ENCODE measurements at regions of chr9 and their contacts with region 1.

Region 1: DNA sequence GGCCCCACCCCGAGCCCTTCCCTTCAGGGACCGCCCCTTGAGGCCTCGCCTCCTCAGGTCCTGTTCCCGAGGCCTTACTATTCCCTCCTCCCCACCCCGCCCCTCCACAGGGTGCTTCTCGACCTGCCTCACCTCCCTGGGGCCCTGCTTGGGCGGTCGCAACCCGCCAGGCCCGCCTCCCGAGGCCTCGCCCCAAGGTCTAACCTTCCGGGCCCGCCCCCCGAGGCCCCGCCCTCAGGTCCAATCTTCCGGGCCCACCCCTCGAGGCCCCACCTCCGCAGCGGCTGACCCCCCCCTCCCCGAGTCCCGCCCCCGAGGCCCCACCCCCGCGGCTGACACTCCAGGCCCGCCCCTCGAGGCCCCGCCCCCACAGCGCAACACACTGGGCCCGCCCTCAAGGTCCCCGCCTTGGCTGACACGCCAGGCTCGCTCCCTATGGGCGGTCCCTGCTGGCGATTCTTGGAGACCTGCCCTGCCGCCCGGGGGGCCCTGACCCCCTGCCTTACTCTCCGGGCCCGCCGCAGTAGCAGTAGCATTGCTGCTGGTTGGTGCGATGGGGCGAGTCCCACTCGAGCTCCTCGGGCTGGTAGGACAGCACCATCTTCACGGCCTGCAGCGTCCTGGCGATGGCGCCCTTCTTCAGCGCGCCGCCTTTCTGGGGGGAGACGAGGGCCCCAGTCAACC is 8.2 kb downstream of the PHF19 start:
- DNase-seq: peak; percentile 97
- ATAC-seq: peak; percentile 90
- H3K4me3 ChIP-seq: peak overlapping the region in 4 of 5 experiments; percentile 57 to 84 (median 71)
- H3K4me3 Mint-ChIP-seq: peak overlapping the region; percentile 97
- H3K27ac ChIP-seq: peak overlapping the region; percentile 69 to 81
- H3K27ac Mint-ChIP-seq: peak overlapping the region; percentile 98
- H3K4me1 ChIP-seq: peaks cover 0 to 19% of the 10 kb centered on the region in 2 donors
- H3K4me1 Mint-ChIP-seq: peaks cover 13% of the 10 kb centered on the region
- H3K27me3 ChIP-seq: no peaks in the 10 kb centered on the region
- H3K27me3 Mint-ChIP-seq: no peaks in the 10 kb centered on the region
- CTCF ChIP-seq: peak; percentile 70

Region 2: GRCh38 chr9:120312031-120312430 is 556.8 kb before region 1 on chr9:
- CTCF ChIA-PET with region 1: no interaction called
- POLR2A ChIA-PET with region 1: no interaction called
- intact Hi-C with region 1: no loop called
- DNase-seq: no peak
- ATAC-seq: no peak
- H3K4me3 ChIP-seq: no peak overlapping the region
- H3K4me3 Mint-ChIP-seq: no peak overlapping the region
- H3K27ac ChIP-seq: no peak overlapping the region
- H3K27ac Mint-ChIP-seq: no peak overlapping the region
- H3K4me1 ChIP-seq: no peaks in the 10 kb centered on the region
- H3K4me1 Mint-ChIP-seq: no peaks in the 10 kb centered on the region
- H3K27me3 ChIP-seq: no peaks in the 10 kb centered on the region
- H3K27me3 Mint-ChIP-seq: peaks cover 19% of the 10 kb centered on the region
- CTCF ChIP-seq: no peak

Region 3: GRCh38 chr9:120733190-120733589 is 135.6 kb before region 1 on chr9:
- CTCF ChIA-PET with region 1: no interaction called
- POLR2A ChIA-PET with region 1: no interaction called
- intact Hi-C with region 1: no loop called
- DNase-seq: no peak
- ATAC-seq: no peak
- H3K4me3 ChIP-seq: no peak overlapping the region
- H3K4me3 Mint-ChIP-seq: no peak overlapping the region
- H3K27ac ChIP-seq: no peak overlapping the region
- H3K27ac Mint-ChIP-seq: no peak overlapping the region
- H3K4me1 ChIP-seq: peaks cover 10 to 16% of the 10 kb centered on the region in 2 donors
- H3K4me1 Mint-ChIP-seq: peaks cover 18% of the 10 kb centered on the region
- H3K27me3 ChIP-seq: no peaks in the 10 kb centered on the region
- H3K27me3 Mint-ChIP-seq: no peaks in the 10 kb centered on the region
- CTCF ChIP-seq: no peak

Region 4: DNA sequence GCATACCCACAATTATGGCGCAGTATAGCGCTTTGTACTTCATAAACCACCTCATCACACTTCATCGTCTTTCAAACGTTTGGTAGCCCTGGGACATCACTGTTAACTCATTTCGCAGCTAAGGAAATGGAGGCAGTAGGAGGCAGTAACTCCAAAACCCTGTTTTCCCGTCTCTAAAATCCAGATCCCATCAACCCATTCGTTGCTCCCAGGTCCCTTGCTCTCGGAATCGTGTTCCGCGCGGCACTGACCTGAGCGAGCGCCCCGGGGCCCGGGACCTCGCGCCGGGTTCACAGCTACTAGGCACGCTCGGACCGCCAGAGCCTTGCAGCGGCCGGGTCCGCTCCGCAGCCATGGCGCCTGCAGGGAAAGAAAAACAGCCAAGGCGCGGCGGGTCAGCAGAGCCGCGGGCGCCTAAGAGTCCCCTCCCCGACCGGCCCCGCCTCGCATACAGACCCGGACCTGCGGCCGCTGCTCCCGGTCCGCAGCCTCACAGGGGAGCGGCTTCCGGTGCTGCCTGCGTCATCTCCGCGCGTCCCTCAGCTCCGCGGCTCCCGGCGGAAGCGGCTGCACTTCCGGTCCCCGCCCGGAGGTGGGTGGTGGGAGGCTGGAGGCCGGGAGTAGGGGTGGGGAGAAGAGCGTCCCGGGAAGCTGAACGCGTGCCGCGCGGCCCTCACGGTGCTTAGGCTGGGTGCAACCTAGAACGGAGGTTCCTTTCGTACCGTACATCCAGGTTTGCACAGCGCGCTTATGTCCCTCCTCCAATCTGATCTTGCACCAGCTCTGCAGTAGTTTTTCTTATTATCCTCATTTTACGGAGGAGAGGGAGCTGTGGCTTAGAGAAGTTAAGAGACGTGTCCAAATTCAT is 75.7 kb before region 1 on chr9 and contains the start of gene FBXW2:
- CTCF ChIA-PET with region 1: interaction called, 3 read pairs
- POLR2A ChIA-PET with region 1: no interaction called
- intact Hi-C with region 1: loop called (anchors 1 kb)
- DNase-seq: peak; percentile 88
- ATAC-seq: peak; percentile 94
- H3K4me3 ChIP-seq: peak within 1 kb of the TSS; percentile 73 to 96 (median 89)
- H3K4me3 Mint-ChIP-seq: peak within 1 kb of the TSS; percentile 92
- H3K27ac ChIP-seq: peak within 1 kb of the TSS; percentile 77 to 87
- H3K27ac Mint-ChIP-seq: peak within 1 kb of the TSS; percentile 92
- H3K4me1 ChIP-seq: peaks cover 18 to 25% of the 10 kb centered on the region in 2 donors
- H3K4me1 Mint-ChIP-seq: peaks cover 38% of the 10 kb centered on the region
- H3K27me3 ChIP-seq: no peaks in the 10 kb centered on the region
- H3K27me3 Mint-ChIP-seq: no peaks in the 10 kb centered on the region
- CTCF ChIP-seq: no peak
- total RNA-seq, gene FBXW2: 70.6 and 73.3 TPM in 2 replicates

Region 5: DNA sequence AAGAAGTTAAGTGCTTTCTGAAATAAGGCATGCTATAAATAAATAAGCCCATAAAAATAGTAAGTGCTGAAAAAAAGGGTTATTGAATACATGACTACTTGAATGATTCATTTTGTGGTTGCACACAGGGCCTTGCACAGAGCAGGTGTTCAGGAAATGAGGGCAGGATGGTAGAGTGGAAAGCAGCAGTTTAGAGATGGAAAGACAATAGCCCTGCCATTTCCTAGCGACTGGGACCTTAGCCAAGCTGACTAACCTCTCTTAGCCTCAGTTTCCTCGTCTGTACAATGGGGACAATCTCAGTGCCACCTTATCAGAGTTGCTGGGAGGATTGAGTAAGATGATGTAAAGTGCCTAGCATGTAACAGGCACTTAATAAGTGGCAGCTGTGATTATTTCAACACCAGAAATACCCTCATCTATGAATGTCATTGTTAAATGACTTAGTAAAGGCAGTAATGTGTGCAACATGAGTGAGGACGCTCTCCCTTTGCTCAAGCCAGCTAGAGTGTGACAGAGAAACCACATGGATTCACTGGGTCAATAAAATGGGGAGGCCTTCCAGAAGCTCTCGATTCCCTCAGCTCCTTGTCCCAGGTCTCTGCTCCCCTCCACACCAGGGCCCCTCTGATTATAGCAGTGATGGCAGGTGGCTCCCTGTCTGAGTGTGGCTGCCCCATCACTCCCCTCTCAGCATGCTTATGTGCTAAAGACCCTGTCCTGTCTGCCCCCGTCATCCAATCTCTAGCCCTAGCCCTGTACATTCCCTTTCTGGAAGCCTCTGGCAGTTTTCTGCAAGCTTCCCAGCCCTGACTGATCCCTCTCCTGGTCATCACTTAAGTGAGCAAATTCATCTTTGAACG is 24.2 kb after region 1 on chr9:
- CTCF ChIA-PET with region 1: interaction called, 7 read pairs
- POLR2A ChIA-PET with region 1: interaction called, 9 read pairs
- intact Hi-C with region 1: loop called (anchors 1 kb)
- DNase-seq: peak; percentile 79
- ATAC-seq: peak; percentile 88
- H3K4me3 ChIP-seq: peak overlapping the region in 1 of 5 experiments; percentile 13
- H3K4me3 Mint-ChIP-seq: peak overlapping the region; percentile 71
- H3K27ac ChIP-seq: peak overlapping the region; percentile 51 to 65
- H3K27ac Mint-ChIP-seq: peak overlapping the region; percentile 79
- H3K4me1 ChIP-seq: peaks cover 48 to 49% of the 10 kb centered on the region in 2 donors
- H3K4me1 Mint-ChIP-seq: peaks cover 50% of the 10 kb centered on the region
- H3K27me3 ChIP-seq: no peaks in the 10 kb centered on the region
- H3K27me3 Mint-ChIP-seq: no peaks in the 10 kb centered on the region
- CTCF ChIP-seq: no peak

Region 6: GRCh38 chr9:120936011-120936763 is 67.4 kb after region 1 on chr9:
- CTCF ChIA-PET with region 1: interaction called, 102 read pairs
- POLR2A ChIA-PET with region 1: interaction called, 10 read pairs
- intact Hi-C with region 1: loop called (anchors 1 kb)
- DNase-seq: peak; percentile 85
- ATAC-seq: peak; percentile 54
- H3K4me3 ChIP-seq: peak overlapping the region in 2 of 5 experiments; percentile 18 to 29
- H3K4me3 Mint-ChIP-seq: peak overlapping the region; percentile 61
- H3K27ac ChIP-seq: peak overlapping the region in 1 of 2 donors; percentile 55
- H3K27ac Mint-ChIP-seq: peak overlapping the region; percentile 44
- H3K4me1 ChIP-seq: peaks cover 58% of the 10 kb centered on the region in 2 donors
- H3K4me1 Mint-ChIP-seq: peaks cover 55% of the 10 kb centered on the region
- H3K27me3 ChIP-seq: no peaks in the 10 kb centered on the region
- H3K27me3 Mint-ChIP-seq: no peaks in the 10 kb centered on the region
- CTCF ChIP-seq: peak; percentile 88

Region 7: DNA sequence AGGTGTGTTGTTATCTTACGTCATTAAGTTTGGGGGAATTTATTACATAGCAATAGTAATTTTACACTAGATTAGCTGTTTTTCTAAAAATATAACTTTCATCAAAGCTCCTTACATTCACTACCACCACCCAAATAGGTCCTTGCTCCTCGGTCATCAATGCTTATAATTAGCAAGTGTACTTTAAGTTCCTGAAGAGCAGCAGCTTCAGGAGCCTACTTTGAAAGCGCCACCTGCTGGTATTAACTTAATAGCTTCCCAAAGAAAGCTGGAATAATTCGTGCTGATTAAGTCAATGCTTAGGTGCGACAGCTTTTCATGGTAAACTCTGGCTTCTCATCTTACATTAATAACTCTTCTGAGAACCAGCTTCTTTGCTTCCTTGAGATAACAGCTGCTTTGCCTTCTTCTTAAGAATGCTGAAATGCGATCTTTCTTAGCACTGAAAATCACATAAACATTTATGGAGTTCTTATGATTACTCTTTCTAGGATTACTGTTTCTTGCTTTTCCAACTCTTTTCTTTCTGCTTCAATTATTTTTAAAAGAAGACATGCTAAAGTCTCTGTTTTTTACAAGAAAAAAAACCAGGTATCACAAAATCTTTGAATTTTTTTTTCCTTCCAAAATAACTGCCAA is 191.3 kb after region 1 on chr9:
- CTCF ChIA-PET with region 1: interaction called, 17 read pairs
- POLR2A ChIA-PET with region 1: no interaction called
- intact Hi-C with region 1: no loop called
- DNase-seq: peak; percentile 76
- ATAC-seq: peak; percentile 51
- H3K4me3 ChIP-seq: no peak overlapping the region
- H3K4me3 Mint-ChIP-seq: no peak overlapping the region
- H3K27ac ChIP-seq: no peak overlapping the region
- H3K27ac Mint-ChIP-seq: no peak overlapping the region
- H3K4me1 ChIP-seq: peaks cover 0 to 7% of the 10 kb centered on the region in 2 donors
- H3K4me1 Mint-ChIP-seq: peaks cover 6% of the 10 kb centered on the region
- H3K27me3 ChIP-seq: no peaks in the 10 kb centered on the region
- H3K27me3 Mint-ChIP-seq: no peaks in the 10 kb centered on the region
- CTCF ChIP-seq: peak; percentile 81

Region 8: DNA sequence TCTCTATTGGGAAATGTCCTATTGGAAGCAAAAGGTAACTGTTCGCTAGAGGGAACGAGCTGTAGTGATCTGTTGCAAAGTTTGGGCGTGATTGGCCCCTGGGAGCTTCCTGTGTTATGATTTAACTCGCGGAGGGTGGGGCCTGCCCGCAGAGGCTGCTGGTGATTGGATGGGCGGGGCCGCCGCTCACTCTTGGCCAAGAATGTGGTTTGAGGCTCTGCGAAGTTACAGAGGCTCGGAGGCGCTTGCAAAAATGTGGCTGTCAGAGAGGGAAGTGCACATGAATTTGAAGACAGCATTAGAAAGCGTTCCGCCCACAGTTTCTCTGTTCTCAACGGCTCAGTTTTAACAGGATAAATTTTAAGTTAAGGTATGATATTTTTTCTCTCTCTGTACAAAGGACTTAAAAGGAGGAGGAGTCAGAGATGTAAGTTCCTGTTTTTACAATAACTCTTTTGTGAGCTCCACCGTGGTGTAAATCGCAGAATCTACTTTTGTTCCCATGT is 252.8 kb after region 1 on chr9:
- CTCF ChIA-PET with region 1: no interaction called
- POLR2A ChIA-PET with region 1: interaction called, 3 read pairs
- intact Hi-C with region 1: loop called (anchors 2 kb)
- DNase-seq: peak; percentile 95
- ATAC-seq: peak; percentile 100
- H3K4me3 ChIP-seq: peak overlapping the region; percentile 44 to 78 (median 65)
- H3K4me3 Mint-ChIP-seq: peak overlapping the region; percentile 86
- H3K27ac ChIP-seq: peak overlapping the region; percentile 52 to 75
- H3K27ac Mint-ChIP-seq: peak overlapping the region; percentile 90
- H3K4me1 ChIP-seq: peaks cover 11 to 19% of the 10 kb centered on the region in 2 donors
- H3K4me1 Mint-ChIP-seq: peaks cover 42% of the 10 kb centered on the region
- H3K27me3 ChIP-seq: no peaks in the 10 kb centered on the region
- H3K27me3 Mint-ChIP-seq: no peaks in the 10 kb centered on the region
- CTCF ChIP-seq: peak; percentile 28

Region 9: DNA sequence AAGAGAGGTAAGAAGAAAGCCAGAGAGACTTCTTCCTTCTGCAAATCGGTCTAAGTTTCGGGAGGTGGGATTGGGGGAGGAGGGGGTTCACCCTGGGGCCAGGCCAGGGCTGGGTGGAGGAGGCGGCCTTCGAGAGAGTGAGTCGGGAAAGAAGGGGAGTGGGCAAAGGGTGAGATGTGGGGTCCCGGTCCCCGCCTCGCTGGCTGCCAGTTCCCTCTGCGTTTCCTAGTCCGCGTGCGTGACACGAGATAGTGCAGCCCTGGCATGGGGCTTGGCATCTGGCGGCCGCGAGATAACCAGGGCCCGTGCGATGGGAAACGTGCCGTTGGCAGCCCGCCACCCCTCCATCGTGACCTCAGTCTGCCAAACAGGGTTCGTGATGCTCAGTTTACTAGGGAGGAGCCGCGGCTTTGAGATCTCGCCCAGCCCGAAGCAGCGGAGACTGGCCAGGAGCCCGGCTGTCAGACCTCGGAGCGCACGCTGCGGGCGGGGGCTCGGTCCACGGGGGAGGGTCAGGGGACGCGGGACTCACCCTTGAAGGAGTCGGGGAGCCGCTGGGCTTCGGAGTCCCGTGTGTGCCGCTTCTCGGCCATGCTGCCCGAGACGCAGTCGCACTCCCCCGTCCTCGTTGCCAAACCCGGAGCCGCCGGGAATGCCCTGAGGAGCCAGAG is 500.9 kb after region 1 on chr9 and contains the start of gene STOM:
- CTCF ChIA-PET with region 1: no interaction called
- POLR2A ChIA-PET with region 1: no interaction called
- intact Hi-C with region 1: loop called (anchors 1 kb)
- DNase-seq: no peak
- ATAC-seq: peak; percentile 56
- H3K4me3 ChIP-seq: peak within 1 kb of the TSS; percentile 58 to 93 (median 71)
- H3K4me3 Mint-ChIP-seq: peak within 1 kb of the TSS; percentile 91
- H3K27ac ChIP-seq: peak within 1 kb of the TSS; percentile 68 to 75
- H3K27ac Mint-ChIP-seq: peak within 1 kb of the TSS; percentile 91
- H3K4me1 ChIP-seq: peaks cover 19 to 20% of the 10 kb centered on the region in 2 donors
- H3K4me1 Mint-ChIP-seq: peaks cover 29% of the 10 kb centered on the region
- H3K27me3 ChIP-seq: no peaks in the 10 kb centered on the region
- H3K27me3 Mint-ChIP-seq: no peaks in the 10 kb centered on the region
- CTCF ChIP-seq: no peak
- total RNA-seq, gene STOM: 6.1 and 6.3 TPM in 2 replicates

Measured in B cell (primary cell).